ENCODE measurements at regions of chr15 and their contacts with region 1.

Region 1: GRCh38 chr15:79380755-79381497 is 51.2 kb upstream of the MINAR1 start:
- DNase-seq: peak; percentile 71
- H3K4me3 ChIP-seq: no peak overlapping the region
- H3K27ac ChIP-seq: no peak overlapping the region
- H3K4me1 ChIP-seq: no peaks in the 10 kb centered on the region
- H3K27me3 ChIP-seq: no peaks in the 10 kb centered on the region
- CTCF ChIP-seq: peak in 3 of 4 experiments; percentile 61 to 81 (median 66)
- EP300 ChIP-seq: no peak
- POLR2A ChIP-seq: no peak

Region 2: DNA sequence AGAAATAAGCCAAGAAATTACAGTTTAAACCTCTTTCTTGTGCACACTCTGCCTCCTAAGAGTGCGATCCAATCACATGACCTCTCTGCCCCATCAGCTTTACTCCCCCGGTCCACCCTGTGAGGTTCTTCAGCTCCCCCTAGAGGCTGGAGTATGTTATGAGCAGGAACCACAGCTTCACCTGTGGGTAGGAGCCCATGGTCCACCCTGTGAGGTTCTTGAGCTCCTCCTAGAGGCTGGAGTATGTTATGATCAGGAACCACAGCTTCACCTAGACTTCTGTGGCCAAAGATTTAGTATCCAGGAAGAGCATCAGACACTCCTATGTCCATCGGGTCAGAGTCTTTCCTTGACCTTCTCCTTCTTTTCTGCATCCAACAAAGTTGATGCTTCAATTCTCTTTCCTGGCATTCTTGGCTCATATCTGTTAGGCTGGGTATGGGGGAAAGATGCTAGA is 215.2 kb after region 1 on chr15:
- intact Hi-C with region 1: loop called (anchors 10 kb)
- DNase-seq: no peak
- H3K4me3 ChIP-seq: no peak overlapping the region
- H3K27ac ChIP-seq: no peak overlapping the region
- H3K4me1 ChIP-seq: no peaks in the 10 kb centered on the region
- H3K27me3 ChIP-seq: no peaks in the 10 kb centered on the region
- CTCF ChIP-seq: peak in 3 of 4 experiments; percentile 52 to 77 (median 61)
- EP300 ChIP-seq: no peak
- POLR2A ChIP-seq: no peak

Region 3: GRCh38 chr15:79608066-79608864 is 227.3 kb after region 1 on chr15:
- intact Hi-C with region 1: no loop called
- DNase-seq: no peak
- H3K4me3 ChIP-seq: no peak overlapping the region
- H3K27ac ChIP-seq: no peak overlapping the region
- H3K4me1 ChIP-seq: no peaks in the 10 kb centered on the region
- H3K27me3 ChIP-seq: no peaks in the 10 kb centered on the region
- CTCF ChIP-seq: no peak
- EP300 ChIP-seq: no peak
- POLR2A ChIP-seq: no peak

Region 4: DNA sequence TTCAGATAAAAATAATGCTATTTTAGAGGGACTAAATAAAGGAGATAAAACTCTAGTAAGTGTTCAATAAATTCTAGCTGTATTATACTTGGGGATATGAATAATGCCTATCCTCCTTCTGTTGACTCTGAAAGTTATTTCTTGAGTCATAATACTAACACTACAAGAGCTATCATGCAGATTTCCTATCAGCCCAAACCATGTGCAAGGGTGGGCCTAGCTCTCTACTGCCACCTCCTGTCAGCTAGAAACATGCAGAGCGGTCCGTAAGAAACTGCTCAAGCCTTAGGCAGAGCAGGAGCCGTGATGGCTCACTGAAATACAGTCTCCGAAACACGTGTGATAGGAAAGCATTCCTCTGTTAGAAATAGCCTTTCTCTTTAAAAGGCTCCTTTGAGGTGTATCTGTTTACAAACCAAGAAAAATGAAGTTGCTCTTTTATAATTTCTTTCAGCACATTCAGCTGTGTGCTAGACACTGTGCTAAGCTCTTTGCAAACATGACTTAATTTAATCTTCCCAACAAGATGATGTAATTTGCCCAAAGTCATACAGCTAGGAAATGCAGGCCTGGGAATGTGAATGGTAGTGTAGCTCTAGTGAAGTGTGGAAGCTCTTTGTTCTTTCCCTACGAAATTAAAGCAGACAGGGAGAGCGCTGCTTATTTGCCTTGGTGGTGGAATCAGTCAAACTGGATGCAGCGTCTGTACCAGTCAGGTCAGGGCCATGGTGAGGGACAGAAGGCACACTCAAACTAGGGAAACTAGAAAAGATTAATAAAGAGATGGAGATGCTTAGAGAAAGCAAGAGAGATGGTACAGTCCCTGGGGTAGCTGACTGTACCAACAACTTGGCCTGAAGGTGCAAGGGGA is 472.8 kb after region 1 on chr15:
- intact Hi-C with region 1: loop called (anchors 1 kb)
- DNase-seq: peak; percentile 65
- H3K4me3 ChIP-seq: no peak overlapping the region
- H3K27ac ChIP-seq: no peak overlapping the region
- H3K4me1 ChIP-seq: no peaks in the 10 kb centered on the region
- H3K27me3 ChIP-seq: no peaks in the 10 kb centered on the region
- CTCF ChIP-seq: peak; percentile 50 to 89 (median 68)
- EP300 ChIP-seq: no peak
- POLR2A ChIP-seq: no peak

Region 5: DNA sequence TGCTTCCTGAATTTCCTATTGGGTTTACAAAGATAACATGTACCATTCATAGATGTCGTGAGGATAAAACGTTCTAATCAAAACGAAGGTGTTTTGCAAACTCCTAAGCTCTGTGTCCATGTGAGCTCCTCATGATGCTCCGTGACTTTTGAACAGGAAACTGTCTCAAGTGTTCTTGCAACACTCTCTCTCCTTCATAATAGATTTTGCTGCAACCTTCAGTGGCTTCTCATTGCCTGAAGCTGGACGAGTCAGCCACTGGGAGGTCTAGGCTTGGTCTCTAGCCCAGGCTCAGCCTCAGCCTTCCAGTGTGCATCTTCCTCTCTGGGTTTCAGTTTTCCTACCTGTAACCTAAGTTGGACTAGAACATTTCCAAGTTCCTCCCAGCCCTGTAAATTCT is 608.8 kb after region 1 on chr15:
- intact Hi-C with region 1: loop called (anchors 5 kb)
- DNase-seq: no peak
- H3K4me3 ChIP-seq: no peak overlapping the region
- H3K27ac ChIP-seq: no peak overlapping the region
- H3K4me1 ChIP-seq: peaks cover 0 to 4% (median 0%) of the 10 kb centered on the region in 4 donors
- H3K27me3 ChIP-seq: no peaks in the 10 kb centered on the region
- CTCF ChIP-seq: no peak
- EP300 ChIP-seq: no peak
- POLR2A ChIP-seq: no peak

Region 6: GRCh38 chr15:80173022-80173759 is 792.3 kb after region 1 on chr15:
- intact Hi-C with region 1: loop called (anchors 5 kb)
- DNase-seq: peak; percentile 82
- H3K4me3 ChIP-seq: no peak overlapping the region
- H3K27ac ChIP-seq: no peak overlapping the region
- H3K4me1 ChIP-seq: peaks cover 0 to 19% (median 6%) of the 10 kb centered on the region in 4 donors
- H3K27me3 ChIP-seq: no peaks in the 10 kb centered on the region
- CTCF ChIP-seq: peak in 3 of 4 experiments; percentile 50 to 65 (median 52)
- EP300 ChIP-seq: no peak
- POLR2A ChIP-seq: no peak